T47D (cell line): ENCODE measurements at regions of chr16 and their contacts with region 1.

Region 1: GRCh38 chr16:85369741-85370528 is 243.2 kb upstream of the GSE1 start:
- DNase-seq: peak; percentile 86 to 94

Region 2: GRCh38 chr16:85090873-85091521 is 278.9 kb before region 1 on chr16:
- in situ Hi-C with region 1: no loop called
- DNase-seq: no peak

Region 3: DNA sequence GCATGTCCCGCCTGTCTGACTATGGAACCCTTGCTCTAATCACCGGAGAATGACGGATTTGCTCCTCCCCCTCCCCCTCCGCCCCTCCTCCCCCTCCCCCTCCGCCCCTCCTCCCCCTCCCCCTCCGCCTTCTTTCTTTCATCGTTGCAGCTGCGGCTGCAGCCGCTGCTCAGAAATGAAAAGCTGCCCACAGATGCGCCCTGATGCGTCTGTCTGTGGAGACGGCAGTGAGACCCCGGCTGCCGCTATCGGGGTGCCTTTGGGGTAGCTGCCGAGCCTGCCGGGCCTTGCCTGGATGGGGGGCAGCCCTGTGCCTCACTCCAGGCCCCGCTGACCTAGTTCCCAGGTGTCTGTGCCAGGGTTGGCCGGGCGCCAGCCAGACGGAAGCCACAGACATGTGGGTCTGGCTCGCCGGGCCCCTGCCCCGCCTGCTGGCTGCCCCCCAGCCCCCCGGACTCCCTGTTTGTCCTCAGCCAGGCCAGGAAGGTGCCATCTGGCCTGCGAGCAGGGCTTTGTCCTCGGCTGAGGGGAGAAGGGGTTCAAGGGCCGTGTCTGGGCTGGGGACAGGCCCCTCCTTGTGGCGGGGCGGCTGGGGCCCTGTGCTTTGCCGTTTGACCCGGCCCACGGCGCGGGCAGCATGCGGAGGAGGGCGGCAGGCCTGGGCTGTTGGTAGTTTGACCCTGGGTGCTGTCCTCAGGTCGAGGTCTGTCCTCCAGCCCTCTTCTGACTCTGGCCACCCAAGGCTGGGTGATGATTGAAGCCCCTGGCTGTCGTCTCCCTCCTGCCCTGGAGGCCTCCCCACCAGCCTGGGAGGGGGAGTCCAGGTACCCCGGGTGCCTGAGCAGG is 281.3 kb after region 1 on chr16:
- in situ Hi-C with region 1: no loop called
- DNase-seq: no peak

Region 4: DNA sequence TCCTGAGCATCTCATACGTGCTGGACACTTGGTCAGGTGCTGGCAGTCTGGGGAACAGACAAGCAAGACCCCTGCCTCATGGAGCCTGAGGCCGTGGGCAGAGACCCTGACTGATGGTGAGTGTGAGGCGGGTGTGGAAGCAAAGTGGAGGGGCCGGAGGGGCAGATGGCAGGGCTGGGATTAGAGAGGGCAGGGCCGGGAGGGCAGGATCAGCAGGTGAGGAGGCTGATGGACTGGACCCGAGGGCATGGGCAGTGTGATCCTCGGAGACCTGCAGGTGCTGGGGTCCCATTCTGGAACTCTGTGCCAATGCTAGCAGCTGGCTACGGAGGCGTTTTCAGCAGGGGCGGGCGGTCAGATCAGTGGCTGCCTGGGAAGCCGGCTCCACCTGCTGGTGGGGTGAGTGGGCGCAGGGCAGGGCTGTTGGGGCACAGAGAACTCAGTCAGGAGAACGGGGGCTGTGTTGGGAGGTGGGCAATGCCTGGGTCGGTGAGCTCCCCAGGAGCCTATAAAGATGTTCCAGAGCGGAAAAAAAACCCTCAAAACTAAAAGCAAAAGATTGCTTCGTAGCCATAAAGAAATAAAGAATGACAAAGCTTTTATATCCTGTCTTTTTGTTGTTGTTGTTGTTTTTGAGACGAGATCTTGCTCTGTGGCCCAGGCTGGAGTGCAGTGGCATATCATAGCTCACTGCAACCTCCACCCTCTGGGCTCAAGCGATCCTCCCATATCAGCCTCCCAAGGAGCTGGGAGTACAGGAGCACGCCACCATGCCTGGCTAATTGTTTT is 389.9 kb after region 1 on chr16:
- in situ Hi-C with region 1: loop called (anchors 10 kb)
- DNase-seq: peak; percentile 84 to 86